Activated CD4-positive, alpha-beta memory T cell treated with anti-CD3 and anti-CD28 coated beads for 36 hours (primary cell): ENCODE measurements at regions of chr5 and their contacts with region 1.

Region 1: GRCh38 chr5:132426525-132427138 is 57.1 kb downstream of the SLC22A5 start:
- DNase-seq: peak; percentile 91
- H3K4me3 Mint-ChIP-seq: peak overlapping the region; percentile 65
- H3K27ac Mint-ChIP-seq: peak overlapping the region; percentile 98
- H3K4me1 Mint-ChIP-seq: peaks cover 96% of the 10 kb centered on the region
- H3K27me3 Mint-ChIP-seq: no peaks in the 10 kb centered on the region

Region 2: GRCh38 chr5:132394667-132395259 is 31.9 kb before region 1 on chr5:
- CTCF ChIA-PET with region 1: no interaction called
- POLR2A ChIA-PET with region 1: no interaction called
- intact Hi-C with region 1: loop called (anchors 1 kb)
- DNase-seq: no peak
- H3K4me3 Mint-ChIP-seq: no peak overlapping the region
- H3K27ac Mint-ChIP-seq: no peak overlapping the region
- H3K4me1 Mint-ChIP-seq: peaks cover 75% of the 10 kb centered on the region
- H3K27me3 Mint-ChIP-seq: no peaks in the 10 kb centered on the region

Region 3: GRCh38 chr5:132437604-132438266 is 11.1 kb after region 1 on chr5:
- CTCF ChIA-PET with region 1: interaction called, 21 read pairs
- POLR2A ChIA-PET with region 1: interaction called, 37 read pairs
- intact Hi-C with region 1: loop called (anchors 1 kb)
- DNase-seq: peak; percentile 83
- H3K4me3 Mint-ChIP-seq: peak overlapping the region; percentile 18
- H3K27ac Mint-ChIP-seq: peak overlapping the region; percentile 78
- H3K4me1 Mint-ChIP-seq: peaks cover 78% of the 10 kb centered on the region
- H3K27me3 Mint-ChIP-seq: no peaks in the 10 kb centered on the region

Region 4: DNA sequence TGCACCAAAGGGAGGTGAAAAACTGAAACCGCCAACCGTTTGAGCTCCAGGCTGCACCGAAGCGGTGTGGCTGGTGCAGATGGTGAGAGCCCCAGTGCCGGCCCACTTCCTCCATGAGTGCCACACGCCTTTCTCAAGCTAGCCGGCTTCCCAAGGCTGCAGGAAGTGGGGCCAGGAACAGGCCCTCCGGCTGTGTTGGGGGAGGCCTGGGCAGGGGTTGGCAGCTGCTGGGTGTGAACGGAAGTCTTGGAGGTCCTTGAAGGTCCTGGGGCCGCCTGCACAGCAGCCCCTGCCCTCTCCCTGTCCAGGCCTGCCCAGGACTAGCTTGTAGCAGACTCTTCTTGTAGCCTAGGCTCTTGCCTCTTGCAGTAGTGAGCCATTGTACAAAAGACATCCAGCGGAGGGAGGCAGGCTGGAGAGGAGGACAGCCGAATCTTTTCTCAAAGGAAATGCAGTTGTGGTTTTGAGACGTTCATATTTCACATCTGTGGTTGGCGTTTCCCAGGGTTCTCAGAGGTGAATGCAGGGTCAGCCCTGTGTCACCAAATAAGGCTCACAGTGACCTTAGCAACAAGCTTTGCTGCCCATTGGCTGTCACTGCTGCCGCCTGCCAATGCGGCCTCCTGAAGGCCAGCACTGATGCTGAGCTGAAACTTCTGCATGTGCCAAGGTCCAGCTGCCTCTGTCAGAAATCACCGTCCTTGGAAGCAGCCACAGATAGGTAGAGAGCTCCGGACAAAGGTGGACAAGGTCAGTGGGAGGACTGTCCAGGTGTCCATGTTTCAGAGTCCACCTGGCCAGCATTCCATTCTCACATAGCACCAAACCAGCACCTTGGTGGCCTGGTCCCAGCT is 40.0 kb after region 1 on chr5:
- CTCF ChIA-PET with region 1: interaction called, 53 read pairs
- POLR2A ChIA-PET with region 1: interaction called, 49 read pairs
- intact Hi-C with region 1: loop called (anchors 1 kb)
- DNase-seq: peak; percentile 85
- H3K4me3 Mint-ChIP-seq: peak overlapping the region; percentile 68
- H3K27ac Mint-ChIP-seq: peak overlapping the region; percentile 75
- H3K4me1 Mint-ChIP-seq: peaks cover 86% of the 10 kb centered on the region
- H3K27me3 Mint-ChIP-seq: no peaks in the 10 kb centered on the region

Region 5: GRCh38 chr5:132479111-132479951 is 52.7 kb after region 1 on chr5:
- CTCF ChIA-PET with region 1: interaction called, 21 read pairs
- POLR2A ChIA-PET with region 1: interaction called, 361 read pairs
- intact Hi-C with region 1: no loop called
- DNase-seq: no peak
- H3K4me3 Mint-ChIP-seq: peak overlapping the region; percentile 28
- H3K27ac Mint-ChIP-seq: peak overlapping the region; percentile 87
- H3K4me1 Mint-ChIP-seq: peaks cover 68% of the 10 kb centered on the region
- H3K27me3 Mint-ChIP-seq: no peaks in the 10 kb centered on the region